ENCODE measurements at regions of chr2 and their contacts with region 1.

Region 1: GRCh38 chr2:191302459-191303139 is 57.4 kb downstream of the MYO1B start:
- DNase-seq: peak; percentile 46
- H3K4me3 Mint-ChIP-seq: no peak overlapping the region
- H3K27ac Mint-ChIP-seq: no peak overlapping the region
- H3K4me1 Mint-ChIP-seq: peaks cover 36% of the 10 kb centered on the region
- H3K27me3 Mint-ChIP-seq: no peaks in the 10 kb centered on the region
- CTCF ChIP-seq: peak; percentile 36

Region 2: GRCh38 chr2:191501561-191502168 is 199.1 kb after region 1 on chr2:
- CTCF ChIA-PET with region 1: no interaction called
- intact Hi-C with region 1: loop called (anchors 5 kb)
- DNase-seq: no peak
- H3K4me3 Mint-ChIP-seq: no peak overlapping the region
- H3K27ac Mint-ChIP-seq: no peak overlapping the region
- H3K4me1 Mint-ChIP-seq: peaks cover 2% of the 10 kb centered on the region
- H3K27me3 Mint-ChIP-seq: no peaks in the 10 kb centered on the region
- CTCF ChIP-seq: peak; percentile 41

Measured in Calu3 (cell line).